Naive thymus-derived CD4-positive, alpha-beta T cell (primary cell): ENCODE measurements at regions of chr1 and their contacts with region 1.

Region 1: DNA sequence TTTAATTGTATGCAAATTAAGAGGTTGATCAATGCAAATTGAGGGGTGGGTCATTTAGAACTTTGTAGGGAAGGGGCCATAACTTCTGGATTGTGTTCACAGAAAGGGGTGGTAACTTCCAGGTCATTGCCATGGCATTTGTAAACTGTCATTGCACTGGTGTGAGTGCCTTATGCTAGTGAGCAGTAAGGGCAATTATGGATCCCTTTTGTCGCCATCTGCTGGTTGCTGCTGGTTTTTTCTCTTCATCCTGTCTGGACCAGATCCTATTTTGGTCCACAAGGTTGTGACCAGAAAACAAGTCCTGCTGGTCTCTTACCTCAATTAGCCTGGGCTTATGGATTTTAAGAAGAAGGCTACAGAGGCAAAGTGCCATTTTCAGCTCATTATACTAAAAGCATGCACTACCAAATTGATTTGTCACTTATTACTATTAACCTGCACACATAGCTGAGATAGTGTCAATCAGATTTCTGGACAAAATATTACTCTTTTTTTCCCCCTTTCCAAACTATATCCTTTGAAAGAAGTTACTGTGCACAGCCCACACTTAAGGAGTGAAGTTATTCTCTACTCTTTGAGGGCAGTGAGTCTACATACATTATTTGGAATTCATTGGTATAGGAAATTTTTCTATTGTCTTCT is 196.2 kb downstream of the ZC3H11B start:
- DNase-seq: peak; percentile 2 to 47 (median 25)
- ATAC-seq: peak; percentile 65
- H3K4me3 ChIP-seq: no peak overlapping the region
- H3K4me3 Mint-ChIP-seq: no peak overlapping the region
- H3K27ac ChIP-seq: no peak overlapping the region
- H3K27ac Mint-ChIP-seq: no peak overlapping the region
- H3K4me1 ChIP-seq: no peaks in the 10 kb centered on the region
- H3K4me1 Mint-ChIP-seq: no peaks in the 10 kb centered on the region
- H3K27me3 ChIP-seq: no peaks in the 10 kb centered on the region
- H3K27me3 Mint-ChIP-seq: peaks cover 0 to 4% (median 0%) of the 10 kb centered on the region in 5 donors

Region 2: GRCh38 chr1:218299416-218299815 is 1117.3 kb before region 1 on chr1:
- CTCF ChIA-PET with region 1: no interaction called
- POLR2A ChIA-PET with region 1: no interaction called
- intact Hi-C with region 1: loop called in 1 of 2 experiments (anchors 1 kb)
- DNase-seq: no peak
- ATAC-seq: no peak
- H3K4me3 ChIP-seq: no peak overlapping the region
- H3K4me3 Mint-ChIP-seq: no peak overlapping the region
- H3K27ac ChIP-seq: no peak overlapping the region
- H3K27ac Mint-ChIP-seq: no peak overlapping the region
- H3K4me1 ChIP-seq: no peaks in the 10 kb centered on the region
- H3K4me1 Mint-ChIP-seq: peaks cover 7 to 51% (median 35%) of the 10 kb centered on the region in 7 donors
- H3K27me3 ChIP-seq: no peaks in the 10 kb centered on the region
- H3K27me3 Mint-ChIP-seq: no peaks in the 10 kb centered on the region

Region 3: GRCh38 chr1:219126377-219126776 is 290.3 kb before region 1 on chr1:
- CTCF ChIA-PET with region 1: no interaction called
- POLR2A ChIA-PET with region 1: no interaction called
- intact Hi-C with region 1: no loop called
- DNase-seq: no peak
- ATAC-seq: no peak
- H3K4me3 ChIP-seq: no peak overlapping the region
- H3K4me3 Mint-ChIP-seq: no peak overlapping the region
- H3K27ac ChIP-seq: no peak overlapping the region
- H3K27ac Mint-ChIP-seq: no peak overlapping the region
- H3K4me1 ChIP-seq: no peaks in the 10 kb centered on the region
- H3K4me1 Mint-ChIP-seq: no peaks in the 10 kb centered on the region
- H3K27me3 ChIP-seq: no peaks in the 10 kb centered on the region
- H3K27me3 Mint-ChIP-seq: peaks cover 0 to 14% (median 0%) of the 10 kb centered on the region in 5 donors

Region 4: DNA sequence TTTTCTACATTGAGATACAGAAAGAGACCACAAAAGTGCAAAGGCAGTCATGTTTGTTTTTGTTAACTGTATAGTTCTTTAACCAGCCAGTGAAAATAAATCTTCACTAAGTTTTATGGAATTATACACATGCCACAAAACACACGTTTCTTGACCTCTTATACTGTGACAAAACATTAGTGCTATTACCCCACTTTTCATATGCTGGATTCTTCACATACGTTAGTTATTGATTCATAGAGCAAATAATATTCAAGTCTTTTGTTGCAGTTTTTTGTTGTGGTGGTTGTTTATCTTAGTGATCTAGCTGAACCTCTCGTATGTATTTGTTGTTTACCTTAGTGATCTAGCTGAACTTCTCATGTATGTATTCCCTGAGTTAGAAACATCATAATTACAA is 215.1 kb before region 1 on chr1:
- CTCF ChIA-PET with region 1: no interaction called
- POLR2A ChIA-PET with region 1: no interaction called
- intact Hi-C with region 1: loop called (anchors 5 kb)
- DNase-seq: no peak
- ATAC-seq: no peak
- H3K4me3 ChIP-seq: no peak overlapping the region
- H3K4me3 Mint-ChIP-seq: no peak overlapping the region
- H3K27ac ChIP-seq: no peak overlapping the region
- H3K27ac Mint-ChIP-seq: no peak overlapping the region
- H3K4me1 ChIP-seq: no peaks in the 10 kb centered on the region
- H3K4me1 Mint-ChIP-seq: peaks cover 0 to 9% (median 1%) of the 10 kb centered on the region in 7 donors
- H3K27me3 ChIP-seq: no peaks in the 10 kb centered on the region
- H3K27me3 Mint-ChIP-seq: no peaks in the 10 kb centered on the region

Region 5: DNA sequence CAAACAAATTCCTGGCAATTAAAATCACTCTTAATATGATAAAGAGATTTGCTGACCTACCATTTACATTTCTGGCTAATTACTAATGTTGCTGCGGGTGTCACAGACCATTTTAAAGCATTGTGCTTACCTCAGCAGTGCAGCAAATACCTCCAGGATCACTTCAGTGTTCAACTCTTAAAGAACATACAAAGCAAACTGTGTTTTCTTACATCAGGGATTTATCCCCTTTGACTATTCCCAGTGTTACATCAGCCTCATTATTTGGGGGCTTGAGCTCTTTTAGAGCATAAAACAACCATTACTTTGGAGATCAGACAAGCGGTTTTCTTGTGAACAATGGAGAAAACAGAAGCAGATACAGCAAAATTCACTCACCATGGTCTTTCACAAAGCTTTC is 57.6 kb before region 1 on chr1:
- CTCF ChIA-PET with region 1: no interaction called
- POLR2A ChIA-PET with region 1: no interaction called
- intact Hi-C with region 1: no loop called
- DNase-seq: no peak
- ATAC-seq: no peak
- H3K4me3 ChIP-seq: no peak overlapping the region
- H3K4me3 Mint-ChIP-seq: no peak overlapping the region
- H3K27ac ChIP-seq: no peak overlapping the region
- H3K27ac Mint-ChIP-seq: no peak overlapping the region
- H3K4me1 ChIP-seq: no peaks in the 10 kb centered on the region
- H3K4me1 Mint-ChIP-seq: peaks cover 0 to 2% (median 0%) of the 10 kb centered on the region in 7 donors
- H3K27me3 ChIP-seq: no peaks in the 10 kb centered on the region
- H3K27me3 Mint-ChIP-seq: no peaks in the 10 kb centered on the region

Region 6: GRCh38 chr1:219460896-219461815 is 44.4 kb after region 1 on chr1:
- CTCF ChIA-PET with region 1: no interaction called
- POLR2A ChIA-PET with region 1: no interaction called
- intact Hi-C with region 1: no loop called
- DNase-seq: no peak
- ATAC-seq: peak; percentile 77
- H3K4me3 ChIP-seq: no peak overlapping the region
- H3K4me3 Mint-ChIP-seq: no peak overlapping the region
- H3K27ac ChIP-seq: no peak overlapping the region
- H3K27ac Mint-ChIP-seq: peak overlapping the region in 1 of 9 donors; percentile 20
- H3K4me1 ChIP-seq: no peaks in the 10 kb centered on the region
- H3K4me1 Mint-ChIP-seq: peaks cover 0 to 4% (median 0%) of the 10 kb centered on the region in 7 donors
- H3K27me3 ChIP-seq: no peaks in the 10 kb centered on the region
- H3K27me3 Mint-ChIP-seq: no peaks in the 10 kb centered on the region

Region 7: GRCh38 chr1:219798283-219799030 is 381.7 kb after region 1 on chr1:
- CTCF ChIA-PET with region 1: no interaction called
- POLR2A ChIA-PET with region 1: no interaction called
- intact Hi-C with region 1: no loop called
- DNase-seq: no peak
- ATAC-seq: no peak
- H3K4me3 ChIP-seq: no peak overlapping the region
- H3K4me3 Mint-ChIP-seq: no peak overlapping the region
- H3K27ac ChIP-seq: no peak overlapping the region
- H3K27ac Mint-ChIP-seq: no peak overlapping the region
- H3K4me1 ChIP-seq: no peaks in the 10 kb centered on the region
- H3K4me1 Mint-ChIP-seq: no peaks in the 10 kb centered on the region
- H3K27me3 ChIP-seq: peaks cover 0 to 2% of the 10 kb centered on the region in 2 donors
- H3K27me3 Mint-ChIP-seq: peaks cover 0 to 21% (median 7%) of the 10 kb centered on the region in 5 donors